K562 (cell line): ENCODE measurements at regions of chr2 and their contacts with region 1.

Region 1: GRCh38 chr2:24009680-24010476 is at the start of gene MFSD2B:
- DNase-seq: peak; percentile 53 to 75 (median 71)
- ATAC-seq: peak; percentile 45
- H3K4me3 ChIP-seq: peak within 1 kb of the TSS; percentile 60
- H3K27ac ChIP-seq: peak within 1 kb of the TSS; percentile 99
- H3K4me1 ChIP-seq: peaks cover 34 to 43% of the 10 kb centered on the region in 2 experiments
- H3K27me3 ChIP-seq: no peaks in the 10 kb centered on the region
- CTCF ChIP-seq: no peak
- EP300 ChIP-seq: no peak
- POLR2A ChIP-seq: no peak
- RAD21 ChIP-seq: no peak
- polyA plus RNA-seq, gene MFSD2B: 2.6 to 3.6 TPM

Region 2: GRCh38 chr2:23939987-23940717 is 69.7 kb before region 1 on chr2 and contains the start of gene UBXN2A:
- CTCF ChIA-PET with region 1: no interaction called
- POLR2A ChIA-PET with region 1: interaction called, 4 read pairs
- in situ Hi-C with region 1: no loop called
- intact Hi-C with region 1: loop called (anchors 5 kb)
- DNase-seq: peak; percentile 87 to 90 (median 88)
- ATAC-seq: peak; percentile 83
- H3K4me3 ChIP-seq: peak within 1 kb of the TSS; percentile 88
- H3K27ac ChIP-seq: peak within 1 kb of the TSS; percentile 93
- H3K4me1 ChIP-seq: peaks cover 11 to 28% of the 10 kb centered on the region in 2 experiments; a peak in 4 of 5 replicates
- H3K27me3 ChIP-seq: no peaks in the 10 kb centered on the region
- CTCF ChIP-seq: no peak
- EP300 ChIP-seq: no peak
- POLR2A ChIP-seq: peak; percentile 83
- RAD21 ChIP-seq: no peak
- polyA plus RNA-seq, gene UBXN2A: 3.4 to 4.1 TPM